ENCODE measurements at regions of chr3 and their contacts with region 1.

Region 1: DNA sequence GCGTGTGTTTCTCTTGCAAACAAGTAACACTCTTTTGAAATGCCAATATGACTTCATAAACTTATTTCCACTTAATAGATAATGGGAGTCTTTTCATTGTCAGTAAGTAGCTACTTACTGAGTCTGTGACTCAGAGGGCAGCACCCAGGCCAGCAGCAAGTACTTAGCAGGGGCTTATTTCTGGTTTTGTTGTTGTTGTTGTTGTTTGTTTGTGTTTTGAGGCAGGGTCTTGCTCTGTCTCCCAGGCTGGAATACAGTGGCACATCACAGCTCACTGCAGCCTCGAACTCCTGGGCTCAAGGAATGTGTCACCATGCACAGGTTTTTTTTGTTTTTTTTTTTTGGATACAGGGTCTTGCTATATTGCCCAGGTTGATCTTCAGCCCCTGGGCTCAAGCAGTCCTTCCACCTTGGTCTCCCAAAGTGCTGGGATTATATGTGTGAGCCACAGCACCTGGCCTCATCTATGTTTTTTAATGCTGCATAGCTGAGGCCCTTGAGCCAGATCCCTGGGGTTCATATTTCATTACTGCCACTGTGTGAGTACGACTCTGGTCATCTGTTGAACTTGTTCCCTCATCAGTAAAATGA is 352.7 kb downstream of the FEZF2 start:
- DNase-seq: no peak
- H3K4me3 ChIP-seq: no peak overlapping the region
- H3K27ac ChIP-seq: no peak overlapping the region
- H3K4me1 ChIP-seq: no peaks in the 10 kb centered on the region
- H3K27me3 ChIP-seq: no peaks in the 10 kb centered on the region
- CTCF ChIP-seq: no peak
- POLR2A ChIP-seq: no peak

Region 2: GRCh38 chr3:61864886-61865285 is 155.7 kb before region 1 on chr3:
- intact Hi-C with region 1: no loop called
- DNase-seq: no peak
- H3K4me3 ChIP-seq: no peak overlapping the region
- H3K27ac ChIP-seq: no peak overlapping the region
- H3K4me1 ChIP-seq: no peaks in the 10 kb centered on the region
- H3K27me3 ChIP-seq: no peaks in the 10 kb centered on the region
- CTCF ChIP-seq: no peak
- POLR2A ChIP-seq: no peak

Region 3: GRCh38 chr3:61966200-61966599 is 54.4 kb before region 1 on chr3:
- intact Hi-C with region 1: loop called (anchors 2 kb)
- DNase-seq: no peak
- H3K4me3 ChIP-seq: no peak overlapping the region
- H3K27ac ChIP-seq: no peak overlapping the region
- H3K4me1 ChIP-seq: no peaks in the 10 kb centered on the region
- H3K27me3 ChIP-seq: no peaks in the 10 kb centered on the region
- CTCF ChIP-seq: no peak
- POLR2A ChIP-seq: no peak

Measured in breast epithelium (tissue), 4 donors.